Activated CD8-positive, alpha-beta T cell treated with anti-CD3 and anti-CD28 coated beads, Interleukin-2, amount 10 ng/mL, durations not matched to agents 7 days and 5 days (primary cell): ENCODE measurements at regions of chr1 and their contacts with region 1.

Region 1: DNA sequence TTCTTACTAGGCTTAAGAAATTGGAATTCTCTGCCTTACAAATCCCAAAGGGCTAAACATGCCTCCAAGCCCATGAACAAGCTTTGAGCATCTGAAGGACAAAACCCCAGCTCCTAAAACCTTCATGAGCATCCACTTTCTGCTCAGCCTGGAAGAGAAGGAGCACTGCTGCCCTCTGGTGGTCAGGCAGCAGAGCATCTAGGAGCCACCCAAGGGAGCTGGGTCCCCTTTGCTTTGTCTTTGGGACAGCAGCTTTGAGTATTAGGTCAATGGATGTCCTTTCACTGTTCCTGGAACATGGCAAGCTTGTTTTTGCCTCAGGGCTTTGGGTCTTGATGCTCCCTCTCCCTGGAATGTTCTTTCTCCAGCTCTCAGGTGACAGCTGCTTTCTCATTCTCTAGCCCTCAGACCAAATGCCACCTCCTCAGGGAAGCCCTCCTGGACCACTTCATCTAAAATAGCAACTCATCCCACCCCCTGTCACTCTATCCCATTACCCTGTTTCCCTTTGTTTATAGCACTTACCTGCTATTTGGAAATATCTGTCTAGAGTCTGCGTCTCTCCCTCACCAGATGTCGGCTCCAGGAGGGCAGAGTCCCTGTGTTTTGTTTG is 25.7 kb downstream of the RAB7B start:
- DNase-seq: peak; percentile 81
- ATAC-seq: peak; percentile 85
- H3K4me3 Mint-ChIP-seq: no peak overlapping the region
- H3K27ac Mint-ChIP-seq: no peak overlapping the region
- H3K4me1 Mint-ChIP-seq: no peaks in the 10 kb centered on the region
- H3K27me3 Mint-ChIP-seq: peaks cover 5% of the 10 kb centered on the region

Region 2: DNA sequence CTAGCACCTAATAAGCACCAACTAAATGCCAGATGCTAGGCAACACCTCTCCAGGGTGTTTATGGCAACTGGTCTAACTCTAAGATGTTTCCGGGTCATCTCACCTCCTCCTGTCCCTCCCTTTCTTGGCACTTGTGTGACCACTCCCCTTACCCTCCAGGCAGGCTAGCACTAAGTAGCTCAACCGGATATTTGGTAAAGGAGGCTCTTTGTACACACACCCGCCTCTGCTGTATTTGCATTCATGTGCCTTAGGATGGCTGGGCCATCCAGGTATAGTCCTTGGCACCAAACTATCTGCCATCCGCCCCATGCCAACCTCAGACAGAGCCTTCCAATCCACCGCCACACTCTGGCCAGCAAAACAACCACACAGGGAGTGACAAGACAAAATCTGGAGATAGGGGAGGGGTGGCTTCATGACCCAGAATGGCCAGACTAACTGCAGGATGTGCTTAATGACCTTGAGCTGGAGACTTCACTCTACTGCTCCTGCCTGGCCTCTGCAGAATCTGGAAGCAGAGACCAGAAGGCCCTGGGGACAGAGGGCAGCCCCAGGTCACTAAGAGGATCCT is 413.6 kb before region 1 on chr1:
- CTCF ChIA-PET with region 1: no interaction called
- POLR2A ChIA-PET with region 1: no interaction called
- DNase-seq: no peak
- ATAC-seq: no peak
- H3K4me3 Mint-ChIP-seq: no peak overlapping the region
- H3K27ac Mint-ChIP-seq: no peak overlapping the region
- H3K4me1 Mint-ChIP-seq: peaks cover 3% of the 10 kb centered on the region
- H3K27me3 Mint-ChIP-seq: peaks cover 56% of the 10 kb centered on the region

Region 3: DNA sequence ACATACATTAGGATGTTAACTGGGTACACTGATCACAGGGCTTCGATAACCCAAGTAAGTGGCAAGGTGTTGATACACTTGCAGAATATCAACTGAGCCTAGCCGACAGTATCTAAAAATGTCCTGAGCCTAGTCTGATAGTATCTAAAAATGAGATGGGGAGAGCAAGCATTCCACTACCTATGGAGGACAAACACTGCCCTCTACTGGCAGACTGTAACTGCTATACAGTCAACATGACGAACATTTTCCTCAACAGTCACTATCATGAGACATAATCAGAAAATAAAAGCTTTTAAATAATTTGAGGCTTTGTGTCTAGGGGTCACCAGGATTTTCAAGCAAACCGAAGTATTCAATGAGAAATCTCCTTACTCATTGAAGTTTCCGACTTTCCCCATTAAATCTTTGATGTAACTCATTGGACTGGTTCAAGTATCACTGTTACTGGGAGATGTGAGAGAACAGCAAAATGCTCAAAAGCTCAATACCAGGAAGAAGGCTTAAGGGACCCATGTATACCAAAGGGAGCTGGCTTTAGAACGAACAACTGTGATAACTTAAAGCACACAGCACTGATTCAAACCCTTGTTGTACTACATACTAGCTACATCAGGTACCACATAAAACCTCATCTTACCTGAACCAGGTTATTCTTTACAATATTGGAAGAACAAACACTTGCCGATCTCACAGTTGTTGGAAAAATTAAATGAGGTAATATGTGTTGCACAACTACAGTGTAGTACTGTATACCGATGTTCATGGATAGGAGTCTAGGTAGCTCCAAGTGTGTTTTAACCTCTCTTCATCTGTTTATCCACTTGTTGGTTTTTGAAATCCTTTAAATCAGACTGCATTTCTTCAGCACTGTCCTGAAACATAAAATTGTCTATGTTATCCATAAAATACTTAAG is 266.1 kb before region 1 on chr1:
- CTCF ChIA-PET with region 1: interaction called, 13 read pairs
- POLR2A ChIA-PET with region 1: no interaction called
- DNase-seq: peak; percentile 80
- ATAC-seq: peak; percentile 90
- H3K4me3 Mint-ChIP-seq: no peak overlapping the region
- H3K27ac Mint-ChIP-seq: peak overlapping the region; percentile 31
- H3K4me1 Mint-ChIP-seq: peaks cover 12% of the 10 kb centered on the region
- H3K27me3 Mint-ChIP-seq: no peaks in the 10 kb centered on the region

Region 4: GRCh38 chr1:205798600-205798999 is 178.9 kb before region 1 on chr1:
- CTCF ChIA-PET with region 1: interaction called, 169 read pairs
- POLR2A ChIA-PET with region 1: interaction called, 4 read pairs
- DNase-seq: no peak
- ATAC-seq: no peak
- H3K4me3 Mint-ChIP-seq: no peak overlapping the region
- H3K27ac Mint-ChIP-seq: no peak overlapping the region
- H3K4me1 Mint-ChIP-seq: no peaks in the 10 kb centered on the region
- H3K27me3 Mint-ChIP-seq: no peaks in the 10 kb centered on the region

Region 5: DNA sequence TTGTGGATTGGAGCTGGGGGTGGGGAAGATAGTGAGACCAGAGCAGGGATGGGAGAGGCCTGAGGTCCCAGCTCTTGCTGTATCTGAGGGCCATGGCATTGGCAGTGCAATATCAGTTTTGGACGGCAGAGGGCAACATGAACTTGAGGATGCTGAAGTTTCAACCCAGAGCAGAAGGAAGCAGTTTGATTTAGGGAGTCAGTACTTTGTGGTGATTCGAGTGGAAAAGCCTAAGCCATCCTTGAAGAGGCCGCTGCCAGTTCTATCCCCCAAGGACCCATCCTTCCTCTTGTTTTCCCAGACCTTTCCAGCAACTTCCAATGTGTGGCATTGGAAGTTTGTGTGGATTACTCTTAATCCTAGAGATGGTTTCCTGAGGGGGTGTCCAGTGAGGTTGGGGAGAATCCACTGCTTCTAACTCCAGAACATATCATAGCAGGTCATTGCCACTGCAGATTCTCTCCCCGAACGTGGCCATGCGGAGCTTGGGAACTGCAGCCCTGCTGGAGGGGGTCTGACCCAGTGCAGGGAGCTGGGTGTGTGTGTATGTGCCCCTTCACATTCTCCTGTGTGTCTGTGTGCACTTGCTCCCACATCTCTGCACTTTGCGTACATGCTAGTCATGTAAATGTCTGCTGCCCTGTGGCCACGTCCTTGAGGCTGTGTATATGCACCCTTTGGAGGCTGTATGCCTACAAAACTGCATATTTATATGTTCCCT is 58.3 kb before region 1 on chr1:
- CTCF ChIA-PET with region 1: interaction called, 166 read pairs
- POLR2A ChIA-PET with region 1: interaction called, 3 read pairs
- DNase-seq: peak; percentile 80
- ATAC-seq: peak; percentile 81
- H3K4me3 Mint-ChIP-seq: no peak overlapping the region
- H3K27ac Mint-ChIP-seq: no peak overlapping the region
- H3K4me1 Mint-ChIP-seq: peaks cover 8% of the 10 kb centered on the region
- H3K27me3 Mint-ChIP-seq: peaks cover 4% of the 10 kb centered on the region

Region 6: DNA sequence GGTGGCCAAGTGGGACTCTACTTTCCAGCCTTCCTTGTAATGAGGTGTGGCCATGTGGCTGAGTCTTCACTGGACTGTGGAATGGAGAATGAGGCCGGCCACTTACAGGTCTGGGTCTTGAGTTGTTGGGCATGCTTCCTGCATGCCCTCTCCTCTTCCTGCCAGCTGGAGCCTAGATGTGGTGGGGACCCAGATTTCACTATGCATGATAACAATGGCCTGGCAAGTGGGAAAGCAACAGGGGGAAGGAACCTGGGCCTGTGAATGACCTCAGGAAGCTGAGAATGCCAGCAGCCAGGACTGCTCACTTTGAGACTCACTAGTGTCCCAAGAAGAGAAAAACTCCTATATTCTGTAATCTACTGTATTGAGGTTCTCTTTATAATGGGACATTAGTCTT is 25.8 kb before region 1 on chr1:
- CTCF ChIA-PET with region 1: interaction called, 13 read pairs
- POLR2A ChIA-PET with region 1: no interaction called
- DNase-seq: no peak
- ATAC-seq: no peak
- H3K4me3 Mint-ChIP-seq: no peak overlapping the region
- H3K27ac Mint-ChIP-seq: no peak overlapping the region
- H3K4me1 Mint-ChIP-seq: no peaks in the 10 kb centered on the region
- H3K27me3 Mint-ChIP-seq: peaks cover 13% of the 10 kb centered on the region

Region 7: DNA sequence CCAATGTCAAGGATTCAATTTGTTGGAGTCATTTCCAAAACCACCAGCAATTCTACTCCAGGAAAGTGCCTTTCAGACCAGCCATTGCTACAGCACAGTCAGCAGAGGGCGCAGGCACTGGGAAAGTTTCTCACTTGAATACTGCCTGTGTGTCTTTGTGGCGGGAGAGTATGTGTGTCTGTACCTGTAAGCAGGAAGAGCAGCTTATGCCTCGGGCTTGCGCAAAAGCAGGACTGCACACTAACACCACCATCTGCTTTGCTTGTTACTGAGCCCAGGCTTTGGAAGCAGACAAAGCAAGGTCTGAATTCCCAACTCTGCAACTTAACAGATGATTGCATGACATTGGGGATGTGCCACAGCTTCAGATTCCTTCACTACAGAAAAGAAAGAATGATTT is 53.2 kb after region 1 on chr1:
- CTCF ChIA-PET with region 1: interaction called, 21 read pairs
- POLR2A ChIA-PET with region 1: no interaction called
- DNase-seq: peak; percentile 79
- ATAC-seq: peak; percentile 98
- H3K4me3 Mint-ChIP-seq: no peak overlapping the region
- H3K27ac Mint-ChIP-seq: no peak overlapping the region
- H3K4me1 Mint-ChIP-seq: peaks cover 7% of the 10 kb centered on the region
- H3K27me3 Mint-ChIP-seq: peaks cover 39% of the 10 kb centered on the region